Thyroid gland (tissue), 4 donors: ENCODE measurements at regions of chr1 and their contacts with region 1.

Region 1: GRCh38 chr1:42335050-42335808 is at the start of gene FOXJ3:
- DNase-seq: peak; percentile 93
- H3K4me3 ChIP-seq: peak within 1 kb of the TSS; percentile 83 to 99 (median 90)
- H3K27ac ChIP-seq: peak within 1 kb of the TSS; percentile 71 to 96 (median 92)
- H3K4me1 ChIP-seq: peaks cover 12 to 16% of the 10 kb centered on the region in 2 donors
- H3K27me3 ChIP-seq: no peaks in the 10 kb centered on the region
- CTCF ChIP-seq: no peak
- POLR2A ChIP-seq: peak; percentile 41 to 88
- total RNA-seq, gene FOXJ3: 55.4 to 87.5 (median 81.0) TPM

Region 2: DNA sequence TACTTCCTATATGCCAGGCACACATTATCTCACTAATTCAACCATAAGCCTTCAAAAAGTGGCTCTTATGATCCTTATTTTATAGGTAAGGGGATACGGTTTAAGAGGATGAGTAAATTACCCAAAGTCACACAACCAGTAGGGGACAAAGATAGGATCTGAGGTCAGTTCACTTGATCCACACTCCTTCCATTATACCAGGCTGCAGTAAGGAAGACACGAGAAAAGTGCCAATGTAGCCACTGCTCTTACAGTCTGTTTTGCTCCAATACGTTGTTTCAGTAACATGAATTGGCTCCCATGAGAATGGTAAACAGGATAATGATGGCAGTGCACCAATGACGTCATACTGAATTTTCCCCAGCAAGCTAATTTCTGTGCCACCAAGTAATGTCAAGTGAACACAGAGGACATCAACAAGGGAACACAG is 155.3 kb before region 1 on chr1:
- intact Hi-C with region 1: loop called (anchors 5 kb)
- DNase-seq: no peak
- H3K4me3 ChIP-seq: no peak overlapping the region
- H3K27ac ChIP-seq: no peak overlapping the region
- H3K4me1 ChIP-seq: peaks cover 13 to 17% of the 10 kb centered on the region in 2 donors
- H3K27me3 ChIP-seq: no peaks in the 10 kb centered on the region
- CTCF ChIP-seq: no peak
- POLR2A ChIP-seq: no peak

Region 3: DNA sequence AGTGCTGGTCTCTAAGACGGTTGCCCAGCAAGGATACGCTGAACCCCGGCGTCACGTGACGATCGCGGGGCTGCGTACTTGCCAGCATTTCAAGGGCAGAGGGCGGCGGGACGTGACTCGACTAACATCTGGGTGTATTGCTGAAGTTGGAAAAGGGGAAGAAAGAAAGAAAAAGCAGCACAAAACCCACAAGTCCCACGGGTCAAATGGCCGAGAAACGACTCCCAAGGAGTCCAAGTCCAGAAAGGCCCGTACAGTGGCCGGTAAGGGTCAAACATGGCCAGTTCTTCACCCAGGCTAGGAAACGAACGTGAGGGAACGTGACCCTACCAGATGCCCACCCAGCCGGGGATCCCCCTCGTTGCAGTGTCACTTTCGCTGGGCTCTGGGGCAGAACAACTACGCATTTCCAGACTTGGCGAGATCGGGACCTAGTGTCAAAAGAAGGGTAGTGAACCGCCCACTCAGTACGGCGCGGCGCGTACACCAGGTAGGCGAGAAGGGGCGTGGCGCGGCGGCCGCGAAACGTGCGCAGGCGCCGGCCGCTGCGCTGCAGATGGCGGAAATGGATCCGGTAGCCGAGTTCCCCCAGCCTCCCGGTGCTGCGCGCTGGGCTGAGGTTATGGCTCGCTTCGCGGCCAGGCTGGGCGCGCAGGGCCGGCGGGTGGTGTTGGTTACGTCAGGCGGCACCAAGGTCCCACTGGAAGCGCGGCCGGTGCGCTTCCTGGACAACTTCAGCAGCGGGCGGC is 121.0 kb after region 1 on chr1 and contains the starts of genes PPCS and ZMYND12:
- intact Hi-C with region 1: loop called (anchors 5 kb)
- DNase-seq: peak; percentile 90 to 91
- H3K4me3 ChIP-seq: peak within 1 kb of the TSS; percentile 62 to 80 (median 68)
- H3K27ac ChIP-seq: peak within 1 kb of the TSS; percentile 62 to 92 (median 91)
- H3K4me1 ChIP-seq: peaks cover 9 to 18% of the 10 kb centered on the region in 2 donors
- H3K27me3 ChIP-seq: no peaks in the 10 kb centered on the region
- CTCF ChIP-seq: peak in 2 of 6 experiments; percentile 32 to 54
- POLR2A ChIP-seq: peak in 1 of 2 donors; percentile 80
- total RNA-seq, gene PPCS: 51.9 to 135 (median 89.8) TPM
- total RNA-seq, gene ZMYND12: 3.5 to 6.5 (median 5.6) TPM

Region 4: DNA sequence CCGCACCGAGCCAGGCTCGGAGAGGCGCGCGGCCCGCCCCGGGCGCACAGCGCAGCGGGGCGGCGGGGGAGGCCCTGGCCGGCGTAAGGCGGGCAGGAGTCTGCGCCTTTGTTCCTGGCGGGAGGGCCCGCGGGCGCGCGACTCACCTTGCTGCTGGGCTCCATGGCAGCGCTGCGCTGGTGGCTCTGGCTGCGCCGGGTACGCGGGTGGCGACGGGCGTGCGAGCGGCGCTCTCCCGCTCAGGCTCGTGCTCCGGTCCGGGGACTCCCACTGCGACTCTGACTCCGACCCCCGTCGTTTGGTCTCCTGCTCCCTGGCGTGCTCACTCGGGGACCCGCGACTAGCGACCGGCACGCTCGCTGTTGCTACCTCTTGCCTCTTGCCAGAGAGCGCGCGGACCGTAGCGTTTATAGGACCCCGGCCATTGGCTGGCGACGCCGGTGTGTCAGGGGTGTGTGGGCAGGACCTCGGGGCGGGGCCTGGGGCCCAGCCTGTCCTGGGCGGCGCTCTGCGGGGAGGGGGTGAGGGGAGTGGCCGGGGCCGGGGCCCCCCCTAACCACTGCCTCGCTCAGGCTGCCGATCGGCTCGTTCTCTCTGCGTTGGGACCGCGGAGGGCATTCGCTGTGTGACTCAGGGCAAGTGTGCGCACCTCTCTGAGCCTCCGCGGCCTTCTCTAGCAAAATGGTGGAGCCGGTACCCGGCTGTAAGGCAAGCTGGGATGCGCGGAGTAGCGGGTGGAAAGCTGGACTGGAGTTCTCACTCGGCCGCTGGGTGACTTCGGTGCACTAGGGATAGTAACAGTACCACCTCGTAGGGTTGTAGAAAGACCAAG is 623.5 kb after region 1 on chr1 and contains the start of gene SLC2A1:
- intact Hi-C with region 1: no loop called
- DNase-seq: peak; percentile 95 to 96
- H3K4me3 ChIP-seq: peak within 1 kb of the TSS; percentile 18 to 52 (median 41)
- H3K27ac ChIP-seq: peak within 1 kb of the TSS; percentile 49 to 80 (median 62)
- H3K4me1 ChIP-seq: peaks cover 11 to 15% of the 10 kb centered on the region in 2 donors
- H3K27me3 ChIP-seq: no peaks in the 10 kb centered on the region
- CTCF ChIP-seq: no peak
- POLR2A ChIP-seq: peak; percentile 44 to 97
- total RNA-seq, gene SLC2A1: 15.0 to 208 (median 91.4) TPM